ENCODE measurements at regions of chr9 and their contacts with region 1.

Region 1: GRCh38 chr9:37293664-37294524 is 128.6 kb upstream of the GRHPR start:
- DNase-seq: no peak
- ATAC-seq: no peak
- H3K4me3 ChIP-seq: no peak overlapping the region
- H3K4me3 Mint-ChIP-seq: peak overlapping the region in 1 of 10 donors; percentile 10
- H3K27ac ChIP-seq: no peak overlapping the region
- H3K27ac Mint-ChIP-seq: no peak overlapping the region
- H3K4me1 ChIP-seq: peaks cover 0 to 2% of the 10 kb centered on the region in 2 donors
- H3K4me1 Mint-ChIP-seq: peaks cover 24 to 83% (median 70%) of the 10 kb centered on the region in 7 donors
- H3K27me3 ChIP-seq: no peaks in the 10 kb centered on the region
- H3K27me3 Mint-ChIP-seq: no peaks in the 10 kb centered on the region

Region 2: DNA sequence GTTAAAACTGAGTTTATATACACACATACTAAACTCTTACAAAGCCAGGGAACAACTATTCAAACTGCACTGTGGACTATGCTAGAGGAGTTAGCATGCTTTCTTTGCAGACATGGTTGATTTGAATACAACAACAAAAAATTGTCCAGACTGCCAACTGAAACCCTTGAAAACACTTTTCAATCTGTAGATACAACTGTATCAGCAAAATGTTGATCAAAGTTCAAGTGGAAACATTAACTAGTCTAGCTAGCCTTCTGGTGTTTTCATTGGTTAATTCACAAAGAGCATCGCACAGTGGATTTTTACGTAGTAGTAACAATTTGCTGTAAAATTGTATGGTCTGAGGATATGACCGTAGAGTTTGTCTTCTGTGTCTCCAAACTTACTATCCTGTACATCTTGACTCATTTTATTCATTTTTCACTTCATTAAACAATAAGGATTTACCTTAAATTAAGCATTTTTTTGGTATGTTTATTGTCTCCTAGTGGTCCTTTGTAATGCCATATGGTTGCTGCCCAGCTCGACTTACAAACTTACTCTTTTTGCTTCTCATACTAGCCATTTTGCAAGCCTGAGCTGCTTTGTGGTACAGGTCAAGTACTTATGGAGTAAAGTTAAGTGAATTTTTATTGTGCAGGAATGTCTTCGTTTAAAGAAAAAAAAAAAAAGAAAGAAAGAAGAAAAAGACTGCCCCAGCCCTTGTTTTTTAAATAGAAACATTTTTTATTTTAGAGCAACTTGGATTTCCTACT is 50.1 kb before region 1 on chr9:
- CTCF ChIA-PET with region 1: no interaction called
- POLR2A ChIA-PET with region 1: no interaction called
- intact Hi-C with region 1: loop called in 1 of 2 experiments (anchors 10 kb)
- DNase-seq: no peak
- ATAC-seq: no peak
- H3K4me3 ChIP-seq: no peak overlapping the region
- H3K4me3 Mint-ChIP-seq: no peak overlapping the region
- H3K27ac ChIP-seq: no peak overlapping the region
- H3K27ac Mint-ChIP-seq: no peak overlapping the region
- H3K4me1 ChIP-seq: no peaks in the 10 kb centered on the region
- H3K4me1 Mint-ChIP-seq: peaks cover 2 to 28% (median 11%) of the 10 kb centered on the region in 7 donors
- H3K27me3 ChIP-seq: no peaks in the 10 kb centered on the region
- H3K27me3 Mint-ChIP-seq: no peaks in the 10 kb centered on the region

Region 3: GRCh38 chr9:37271679-37272078 is 22.2 kb before region 1 on chr9:
- CTCF ChIA-PET with region 1: no interaction called
- POLR2A ChIA-PET with region 1: no interaction called
- intact Hi-C with region 1: loop called in 1 of 2 experiments (anchors 2 kb)
- DNase-seq: no peak
- ATAC-seq: no peak
- H3K4me3 ChIP-seq: no peak overlapping the region
- H3K4me3 Mint-ChIP-seq: no peak overlapping the region
- H3K27ac ChIP-seq: no peak overlapping the region
- H3K27ac Mint-ChIP-seq: no peak overlapping the region
- H3K4me1 ChIP-seq: no peaks in the 10 kb centered on the region
- H3K4me1 Mint-ChIP-seq: peaks cover 0 to 17% (median 7%) of the 10 kb centered on the region in 7 donors
- H3K27me3 ChIP-seq: no peaks in the 10 kb centered on the region
- H3K27me3 Mint-ChIP-seq: no peaks in the 10 kb centered on the region